GM12878 (cell line): ENCODE measurements at regions of chr20 and their contacts with region 1.

Region 1: DNA sequence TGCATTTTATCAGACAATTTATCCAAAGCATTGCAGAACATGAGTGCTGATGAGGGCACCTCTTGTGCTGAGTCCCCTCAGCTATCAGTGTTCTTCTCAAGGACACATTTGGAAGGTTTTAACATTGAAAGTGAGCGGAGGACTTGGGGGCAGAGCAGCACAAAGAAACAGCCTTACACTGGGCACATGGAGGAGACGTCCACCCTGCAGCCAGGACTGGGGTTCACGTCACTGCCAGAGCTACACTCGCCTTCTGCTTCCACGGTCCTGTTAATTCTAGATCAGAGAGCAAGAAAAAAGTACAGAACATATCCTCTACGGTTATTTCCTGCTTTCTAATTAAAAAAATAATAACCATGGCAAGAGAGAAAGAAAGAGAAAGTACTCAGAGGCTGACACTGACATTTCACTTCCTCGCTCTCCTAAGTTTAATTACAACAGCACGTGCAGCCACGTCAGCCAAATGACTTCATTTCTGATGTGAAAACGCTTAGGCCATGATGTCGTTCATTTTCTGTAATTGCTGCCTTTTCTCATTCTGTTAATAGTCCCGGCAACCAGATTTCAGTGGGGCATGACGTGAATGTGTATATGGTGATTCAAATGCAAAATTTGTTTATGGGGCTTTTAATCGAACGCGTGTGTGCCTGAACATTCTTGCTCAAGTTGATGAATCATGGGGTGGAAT is 5.1 kb downstream of the PRND start:
- DNase-seq: peak; percentile 24
- ATAC-seq: peak; percentile 77
- H3K4me3 ChIP-seq: peak overlapping the region; percentile 33; the same call in 1 of the 2 replicates
- H3K27ac ChIP-seq: no peak overlapping the region
- H3K4me1 ChIP-seq: peaks cover 7% of the 10 kb centered on the region; the same call in 1 of the 2 replicates
- H3K27me3 ChIP-seq: no peaks in the 10 kb centered on the region; a peak in 1 of 4 replicates
- CTCF ChIP-seq: no peak
- EP300 ChIP-seq: no peak
- POLR2A ChIP-seq: no peak
- RAD21 ChIP-seq: no peak

Region 2: GRCh38 chr20:4740774-4741431 is 14.0 kb after region 1 on chr20:
- CTCF ChIA-PET with region 1: interaction called, 10 read pairs
- POLR2A ChIA-PET with region 1: no interaction called
- RAD21 ChIA-PET with region 1: interaction called, 4 read pairs
- SMC1A ChIA-PET with region 1: interaction called, 4 read pairs
- in situ Hi-C with region 1: no loop called
- intact Hi-C with region 1: no loop called
- DNase-seq: no peak
- ATAC-seq: peak; percentile 83
- H3K4me3 ChIP-seq: no peak overlapping the region
- H3K27ac ChIP-seq: no peak overlapping the region
- H3K4me1 ChIP-seq: no peaks in the 10 kb centered on the region
- H3K27me3 ChIP-seq: no peaks in the 10 kb centered on the region; a peak in 2 of 4 replicates
- CTCF ChIP-seq: peak; percentile 70 to 86 (median 79)
- EP300 ChIP-seq: no peak
- POLR2A ChIP-seq: no peak
- RAD21 ChIP-seq: peak; percentile 50

Region 3: GRCh38 chr20:4774207-4774606 is 47.4 kb after region 1 on chr20:
- CTCF ChIA-PET with region 1: no interaction called
- POLR2A ChIA-PET with region 1: no interaction called
- RAD21 ChIA-PET with region 1: no interaction called
- SMC1A ChIA-PET with region 1: no interaction called
- in situ Hi-C with region 1: no loop called
- intact Hi-C with region 1: no loop called
- DNase-seq: no peak
- ATAC-seq: no peak
- H3K4me3 ChIP-seq: no peak overlapping the region
- H3K27ac ChIP-seq: no peak overlapping the region
- H3K4me1 ChIP-seq: no peaks in the 10 kb centered on the region
- H3K27me3 ChIP-seq: no peaks in the 10 kb centered on the region
- CTCF ChIP-seq: no peak
- EP300 ChIP-seq: no peak
- POLR2A ChIP-seq: no peak
- RAD21 ChIP-seq: no peak

Region 4: DNA sequence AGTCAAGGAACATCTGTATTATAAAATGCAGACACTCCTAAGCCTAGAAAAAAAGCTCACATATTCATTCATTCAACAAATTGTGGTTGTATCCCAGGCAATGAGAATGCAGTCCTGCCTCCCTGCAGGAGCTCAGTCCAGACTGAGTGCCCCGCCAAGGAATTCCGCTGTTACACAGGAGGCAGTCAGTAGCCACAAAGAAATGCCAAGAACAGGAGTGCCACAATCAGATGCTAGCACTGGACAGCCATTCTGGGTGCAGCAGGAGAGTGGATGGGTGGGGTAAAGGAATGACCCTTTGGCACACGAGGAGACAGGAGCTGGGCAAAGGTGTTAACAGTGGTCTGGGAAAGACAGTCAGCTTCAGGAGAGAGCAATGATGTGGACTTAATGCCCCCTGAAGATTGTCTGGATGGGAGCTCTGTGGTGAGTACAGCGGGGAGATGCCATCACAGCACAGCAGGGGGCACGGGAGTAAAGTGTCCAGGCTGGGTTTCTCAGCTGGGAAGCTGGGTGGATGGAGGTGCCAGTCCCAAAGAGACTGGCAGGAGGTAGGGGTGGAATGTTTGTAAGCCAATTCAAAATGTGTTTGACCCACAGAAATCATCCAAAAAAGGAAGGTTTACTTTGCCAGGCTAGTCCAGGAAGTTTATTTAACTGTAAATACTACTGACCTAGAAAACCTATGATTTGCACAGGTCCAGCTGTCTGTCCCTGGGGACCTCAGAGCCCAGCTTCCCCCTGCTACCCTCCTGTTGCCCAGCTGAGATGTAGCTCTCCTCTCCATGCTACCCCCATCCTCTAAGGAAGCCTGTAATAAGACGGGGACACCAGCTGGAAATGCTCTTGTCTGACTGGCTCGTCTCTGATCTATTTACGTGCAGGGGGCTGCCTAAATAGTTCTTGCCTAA is 190.4 kb after region 1 on chr20:
- CTCF ChIA-PET with region 1: no interaction called
- POLR2A ChIA-PET with region 1: no interaction called
- RAD21 ChIA-PET with region 1: no interaction called
- SMC1A ChIA-PET with region 1: no interaction called
- in situ Hi-C with region 1: no loop called
- intact Hi-C with region 1: no loop called
- DNase-seq: no peak
- ATAC-seq: no peak
- H3K4me3 ChIP-seq: no peak overlapping the region
- H3K27ac ChIP-seq: no peak overlapping the region
- H3K4me1 ChIP-seq: no peaks in the 10 kb centered on the region
- H3K27me3 ChIP-seq: no peaks in the 10 kb centered on the region
- CTCF ChIP-seq: no peak
- EP300 ChIP-seq: no peak
- POLR2A ChIP-seq: no peak
- RAD21 ChIP-seq: no peak